ENCODE measurements at regions of chr3 and their contacts with region 1.

Region 1: GRCh38 chr3:98343647-98344507 is 9.8 kb upstream of the OR5K4 start:
- DNase-seq: peak; percentile 19 to 63 (median 28)
- ATAC-seq: peak; percentile 74
- H3K4me3 ChIP-seq: no peak overlapping the region
- H3K27ac ChIP-seq: no peak overlapping the region
- H3K4me1 ChIP-seq: no peaks in the 10 kb centered on the region
- H3K27me3 ChIP-seq: no peaks in the 10 kb centered on the region
- CTCF ChIP-seq: peak; percentile 47 to 66 (median 57); a peak in 5 of 6 replicates
- EP300 ChIP-seq: no peak
- POLR2A ChIP-seq: no peak
- RAD21 ChIP-seq: peak in 1 of 2 experiments; percentile 40; a peak in 1 of 4 replicates

Region 2: GRCh38 chr3:98573181-98573728 is 229.4 kb after region 1 on chr3:
- CTCF ChIA-PET with region 1: no interaction called
- POLR2A ChIA-PET with region 1: no interaction called
- in situ Hi-C with region 1: no loop called
- intact Hi-C with region 1: loop called (anchors 10 kb)
- DNase-seq: peak in 2 of 4 experiments; percentile 21 to 29
- ATAC-seq: peak; percentile 70
- H3K4me3 ChIP-seq: no peak overlapping the region
- H3K27ac ChIP-seq: no peak overlapping the region
- H3K4me1 ChIP-seq: peaks cover 6 to 8% of the 10 kb centered on the region in 2 experiments; a peak in 4 of 5 replicates
- H3K27me3 ChIP-seq: no peaks in the 10 kb centered on the region
- CTCF ChIP-seq: peak in 2 of 3 experiments; percentile 30 to 40; a peak in 3 of 6 replicates
- EP300 ChIP-seq: no peak
- POLR2A ChIP-seq: no peak
- RAD21 ChIP-seq: peak; percentile 25 to 57; a peak in 3 of 4 replicates